ENCODE measurements at regions of chr2 and their contacts with region 1.

Region 1: GRCh38 chr2:99337113-99338028 is at the start of gene EIF5B:
- DNase-seq: peak; percentile 88
- ATAC-seq: peak; percentile 91
- H3K4me3 ChIP-seq: peak within 1 kb of the TSS; percentile 89 to 96
- H3K27ac ChIP-seq: peak within 1 kb of the TSS; percentile 94
- H3K4me1 ChIP-seq: peaks cover 34% of the 10 kb centered on the region; the same call in 1 of the 2 replicates
- H3K27me3 ChIP-seq: no peaks in the 10 kb centered on the region
- CTCF ChIP-seq: peak; percentile 97
- total RNA-seq, gene EIF5B: 49.0 TPM

Region 2: GRCh38 chr2:99180755-99181623 is 156.4 kb before region 1 on chr2 and contains the starts of genes MITD1 and MRPL30:
- CTCF ChIA-PET with region 1: no interaction called
- POLR2A ChIA-PET with region 1: interaction called, 4 read pairs
- in situ Hi-C with region 1: no loop called
- intact Hi-C with region 1: loop called (anchors 5 kb)
- DNase-seq: peak; percentile 94
- ATAC-seq: peak; percentile 98
- H3K4me3 ChIP-seq: peak within 1 kb of the TSS; percentile 68 to 99
- H3K27ac ChIP-seq: peak within 1 kb of the TSS; percentile 88
- H3K4me1 ChIP-seq: peaks cover 12% of the 10 kb centered on the region
- H3K27me3 ChIP-seq: no peaks in the 10 kb centered on the region
- CTCF ChIP-seq: no peak
- total RNA-seq, gene MITD1: 36.0 TPM
- total RNA-seq, gene MRPL30: 25.6 TPM

Region 3: GRCh38 chr2:99317166-99317872 is 20.1 kb before region 1 on chr2:
- CTCF ChIA-PET with region 1: no interaction called
- POLR2A ChIA-PET with region 1: interaction called, 11 read pairs
- in situ Hi-C with region 1: no loop called
- intact Hi-C with region 1: no loop called
- DNase-seq: no peak
- ATAC-seq: no peak
- H3K4me3 ChIP-seq: no peak overlapping the region
- H3K27ac ChIP-seq: no peak overlapping the region
- H3K4me1 ChIP-seq: no peaks in the 10 kb centered on the region
- H3K27me3 ChIP-seq: no peaks in the 10 kb centered on the region
- CTCF ChIP-seq: no peak

Region 4: DNA sequence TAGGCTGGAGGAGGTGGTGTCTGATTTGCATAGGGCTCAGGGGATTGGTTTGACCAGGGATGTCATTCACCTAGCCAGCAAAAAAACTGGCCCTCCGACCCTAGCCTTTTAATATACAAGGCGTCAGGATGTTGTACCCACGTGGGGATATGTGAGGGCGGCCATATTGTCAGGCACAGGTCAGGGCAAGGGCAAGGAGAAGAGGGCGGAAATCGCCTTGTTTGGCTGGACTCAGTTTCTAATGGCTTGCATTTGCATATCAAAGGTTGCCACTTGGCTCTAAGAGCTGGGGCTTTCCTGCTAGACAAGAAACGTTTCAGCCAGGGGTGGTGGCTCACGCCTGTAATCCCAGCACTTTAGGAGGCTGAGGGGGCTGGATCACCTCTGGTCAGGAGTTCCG is 1200.5 kb after region 1 on chr2:
- CTCF ChIA-PET with region 1: no interaction called
- POLR2A ChIA-PET with region 1: no interaction called
- in situ Hi-C with region 1: no loop called
- intact Hi-C with region 1: no loop called
- DNase-seq: no peak
- ATAC-seq: no peak
- H3K4me3 ChIP-seq: no peak overlapping the region
- H3K27ac ChIP-seq: no peak overlapping the region
- H3K4me1 ChIP-seq: no peaks in the 10 kb centered on the region
- H3K27me3 ChIP-seq: no peaks in the 10 kb centered on the region; the same call in 1 of the 2 replicates
- CTCF ChIP-seq: no peak